ENCODE measurements at regions of chr4 and their contacts with region 1.

Region 1: GRCh38 chr4:44493924-44494323 is 45.3 kb upstream of the KCTD8 start:
- DNase-seq: no peak
- ATAC-seq: no peak
- H3K4me3 Mint-ChIP-seq: no peak overlapping the region
- H3K27ac Mint-ChIP-seq: no peak overlapping the region
- H3K4me1 Mint-ChIP-seq: no peaks in the 10 kb centered on the region
- H3K27me3 Mint-ChIP-seq: peaks cover 2% of the 10 kb centered on the region

Region 2: GRCh38 chr4:42995343-42995944 is 1498.5 kb before region 1 on chr4:
- CTCF ChIA-PET with region 1: no interaction called
- POLR2A ChIA-PET with region 1: no interaction called
- intact Hi-C with region 1: loop called in 1 of 2 experiments (anchors 10 kb)
- DNase-seq: no peak
- ATAC-seq: peak; percentile 53
- H3K4me3 Mint-ChIP-seq: no peak overlapping the region
- H3K27ac Mint-ChIP-seq: no peak overlapping the region
- H3K4me1 Mint-ChIP-seq: no peaks in the 10 kb centered on the region
- H3K27me3 Mint-ChIP-seq: peaks cover 2% of the 10 kb centered on the region